Activated CD8-positive, alpha-beta T cell treated with anti-CD3 and anti-CD28 coated beads for 36 hours (primary cell): ENCODE measurements at regions of chr1 and their contacts with region 1.

Region 1: DNA sequence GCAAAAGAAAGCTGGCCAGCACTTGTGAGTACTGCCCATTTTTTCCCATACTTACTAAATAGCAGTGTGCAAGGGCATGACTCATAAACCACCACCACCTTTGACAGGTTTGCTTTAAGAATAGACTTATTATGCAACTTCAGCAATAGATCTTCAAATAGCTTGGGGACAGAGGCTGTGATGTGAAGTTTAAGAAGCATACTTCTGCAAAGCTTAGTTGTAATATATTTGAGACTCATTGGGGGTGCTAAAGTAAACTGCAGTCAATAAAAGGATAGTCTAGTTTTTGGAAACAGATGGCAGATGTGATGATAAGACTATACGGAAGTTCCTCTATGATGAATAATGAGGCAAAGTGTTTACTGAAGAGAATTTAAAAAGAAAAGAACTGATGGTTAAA is 210.0 kb downstream of the PLA2G4A start:
- DNase-seq: no peak
- ATAC-seq: no peak
- H3K4me3 Mint-ChIP-seq: no peak overlapping the region
- H3K27ac Mint-ChIP-seq: no peak overlapping the region
- H3K4me1 Mint-ChIP-seq: no peaks in the 10 kb centered on the region
- H3K27me3 Mint-ChIP-seq: no peaks in the 10 kb centered on the region
- CTCF ChIP-seq: no peak

Region 2: GRCh38 chr1:187001198-187001889 is 37.4 kb before region 1 on chr1:
- CTCF ChIA-PET with region 1: no interaction called
- POLR2A ChIA-PET with region 1: no interaction called
- intact Hi-C with region 1: no loop called
- DNase-seq: no peak
- ATAC-seq: no peak
- H3K4me3 Mint-ChIP-seq: no peak overlapping the region
- H3K27ac Mint-ChIP-seq: no peak overlapping the region
- H3K4me1 Mint-ChIP-seq: no peaks in the 10 kb centered on the region
- H3K27me3 Mint-ChIP-seq: peaks cover 5% of the 10 kb centered on the region
- CTCF ChIP-seq: no peak

Region 3: DNA sequence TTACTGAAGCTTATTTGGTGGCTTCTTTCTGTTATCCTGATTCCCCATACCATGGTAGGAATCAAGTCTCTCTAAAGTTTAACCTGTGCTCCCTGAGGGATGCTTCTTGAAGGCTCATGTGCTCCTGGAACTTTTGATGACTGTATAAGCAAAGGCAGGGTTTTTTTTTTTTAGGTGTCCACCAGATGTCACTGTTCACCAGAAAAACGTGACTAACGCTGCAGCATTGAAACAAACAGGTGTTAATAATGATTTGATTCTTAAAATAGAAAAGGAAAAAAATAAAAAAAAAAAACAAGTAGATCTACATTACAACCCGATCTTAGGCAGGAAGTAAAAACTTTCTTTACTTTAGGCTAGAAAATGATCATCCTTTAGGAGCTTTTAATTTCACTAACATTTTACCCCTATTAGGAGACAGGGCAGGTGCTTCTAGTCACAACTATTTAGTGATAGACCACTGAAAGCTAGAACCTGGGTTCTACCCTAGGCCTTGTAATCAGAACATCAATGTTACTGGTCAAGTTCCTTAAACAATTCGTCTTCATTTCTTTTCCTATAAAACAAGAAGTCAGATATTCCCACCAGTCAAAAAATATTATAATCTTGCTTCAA is 12.9 kb after region 1 on chr1:
- CTCF ChIA-PET with region 1: interaction called, 16 read pairs
- POLR2A ChIA-PET with region 1: no interaction called
- intact Hi-C with region 1: no loop called
- DNase-seq: no peak
- ATAC-seq: no peak
- H3K4me3 Mint-ChIP-seq: no peak overlapping the region
- H3K27ac Mint-ChIP-seq: no peak overlapping the region
- H3K4me1 Mint-ChIP-seq: no peaks in the 10 kb centered on the region
- H3K27me3 Mint-ChIP-seq: no peaks in the 10 kb centered on the region
- CTCF ChIP-seq: peak; percentile 64